Activated CD4-positive, alpha-beta T cell treated with anti-CD3 and anti-CD28 coated beads, Interleukin-2, amount 10 ng/mL, durations not matched to agents 24 days and 14 days (primary cell): ENCODE measurements at regions of chr3 and their contacts with region 1.

Region 1: DNA sequence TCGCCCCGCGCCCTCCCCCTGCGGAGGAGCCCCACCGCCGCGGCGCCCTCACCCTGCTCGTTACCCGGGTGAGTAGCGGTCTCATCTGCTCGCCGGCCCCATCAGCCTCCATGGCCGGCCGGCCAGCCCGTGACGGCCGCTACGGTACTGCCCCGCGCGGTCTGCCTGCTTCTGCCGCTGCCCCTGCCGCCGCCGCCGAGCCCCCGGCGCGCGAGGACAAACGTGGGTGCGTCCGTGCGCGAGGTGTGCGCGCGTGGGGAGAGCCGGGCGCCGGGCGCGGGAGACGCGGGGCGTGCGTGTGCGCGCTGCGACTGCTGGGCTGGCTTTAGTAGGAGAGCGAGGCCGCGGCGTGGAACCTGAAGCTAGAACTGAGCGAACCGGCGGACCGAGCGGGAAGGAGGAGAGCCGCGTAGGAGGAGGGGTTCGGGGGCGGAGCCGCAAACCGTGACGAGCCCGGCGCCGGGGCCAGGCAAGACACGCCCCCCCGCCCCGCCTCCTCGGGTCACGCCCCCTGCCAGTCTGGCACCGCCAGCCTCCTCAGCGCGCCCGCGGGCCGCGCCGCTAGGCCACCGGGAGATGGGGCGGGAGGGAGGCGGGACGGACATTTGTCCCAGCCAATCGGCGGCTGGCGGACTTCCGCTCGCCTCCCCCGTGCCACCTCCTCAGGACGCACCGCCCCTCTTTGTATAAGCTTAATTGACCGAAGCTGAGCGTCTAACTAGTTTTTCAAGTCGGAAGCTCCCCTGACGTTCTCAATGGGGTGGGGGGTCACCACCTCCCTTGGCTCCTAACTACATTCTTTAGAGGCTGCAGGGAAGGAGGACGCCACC is at the start of gene SLC4A7:
- DNase-seq: peak; percentile 99
- H3K4me3 Mint-ChIP-seq: peak within 1 kb of the TSS; percentile 100
- H3K27ac Mint-ChIP-seq: peak within 1 kb of the TSS; percentile 99
- H3K4me1 Mint-ChIP-seq: peaks cover 35% of the 10 kb centered on the region
- H3K27me3 Mint-ChIP-seq: no peaks in the 10 kb centered on the region
- total RNA-seq, gene SLC4A7: 65.8 and 69.0 TPM in 2 replicates

Region 2: DNA sequence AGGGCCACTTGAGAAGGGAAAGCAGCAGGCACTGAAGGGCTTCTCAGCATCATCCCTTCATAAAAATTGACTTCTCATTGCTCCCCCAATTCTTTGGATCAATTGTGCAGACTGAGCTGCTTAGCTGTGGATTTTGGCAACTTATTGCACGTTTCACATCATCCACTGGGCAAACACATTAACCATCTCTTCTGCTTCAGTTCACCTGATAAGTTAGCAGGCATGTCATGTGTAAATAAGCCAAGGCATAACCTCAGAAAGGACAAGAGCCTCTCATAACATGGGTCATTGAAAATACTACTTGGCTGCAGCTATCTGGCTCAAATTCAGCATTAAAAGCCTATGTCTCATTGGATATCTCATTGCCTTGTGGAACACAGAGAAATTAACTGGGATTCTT is 495.2 kb before region 1 on chr3:
- intact Hi-C with region 1: no loop called
- DNase-seq: no peak
- H3K4me3 Mint-ChIP-seq: no peak overlapping the region
- H3K27ac Mint-ChIP-seq: no peak overlapping the region
- H3K4me1 Mint-ChIP-seq: no peaks in the 10 kb centered on the region
- H3K27me3 Mint-ChIP-seq: no peaks in the 10 kb centered on the region

Region 3: GRCh38 chr3:27368831-27369607 is 115.2 kb before region 1 on chr3 and contains the start of gene NEK10:
- intact Hi-C with region 1: loop called (anchors 1 kb)
- DNase-seq: peak; percentile 98
- H3K4me3 Mint-ChIP-seq: peak within 1 kb of the TSS; percentile 95
- H3K27ac Mint-ChIP-seq: peak within 1 kb of the TSS; percentile 77
- H3K4me1 Mint-ChIP-seq: peaks cover 13% of the 10 kb centered on the region
- H3K27me3 Mint-ChIP-seq: no peaks in the 10 kb centered on the region
- total RNA-seq, gene NEK10: 0.26 and 0.28 TPM in 2 replicates

Region 4: DNA sequence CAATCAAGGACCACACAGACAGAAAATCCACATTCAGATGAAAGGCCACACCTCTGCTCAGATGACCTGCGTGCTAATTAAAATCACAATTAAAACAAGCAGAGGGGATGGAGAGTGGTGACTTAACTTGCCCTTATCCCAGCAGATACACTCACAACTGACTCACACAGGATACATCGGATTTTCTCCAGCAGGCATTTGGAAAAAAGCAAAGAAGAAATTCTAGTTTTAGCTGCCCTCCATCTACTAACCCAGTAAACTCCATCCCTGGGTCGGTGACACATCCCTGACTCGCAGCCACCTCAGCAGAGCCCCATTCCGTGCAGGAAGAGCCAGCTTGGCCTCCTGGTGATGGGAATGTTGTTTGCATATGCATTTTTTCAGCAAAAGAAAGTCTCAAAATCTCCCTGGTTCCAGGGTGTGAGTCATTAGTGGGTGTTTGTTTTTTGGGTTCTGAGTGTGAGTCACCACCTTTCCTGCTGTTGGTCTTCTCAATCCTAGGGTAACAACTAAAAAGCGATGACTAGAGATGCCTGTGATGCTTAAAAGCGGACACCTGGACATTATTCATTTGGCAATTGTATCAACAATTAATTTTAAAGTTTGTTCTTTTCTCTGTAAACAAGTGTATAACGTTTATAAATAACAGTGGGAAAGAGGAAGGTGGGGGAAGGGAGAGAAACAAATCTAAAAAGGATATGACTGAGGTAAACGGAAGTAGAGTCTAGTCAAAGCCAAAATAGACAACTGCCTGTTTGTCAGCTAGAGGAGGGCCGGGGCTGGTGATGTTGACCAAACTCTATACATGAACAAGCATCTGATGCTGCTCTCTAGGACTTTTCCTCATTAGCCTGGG is 49.7 kb after region 1 on chr3:
- intact Hi-C with region 1: loop called (anchors 2 kb)
- DNase-seq: peak; percentile 74
- H3K4me3 Mint-ChIP-seq: peak overlapping the region; percentile 61
- H3K27ac Mint-ChIP-seq: peak overlapping the region; percentile 84
- H3K4me1 Mint-ChIP-seq: peaks cover 21% of the 10 kb centered on the region
- H3K27me3 Mint-ChIP-seq: no peaks in the 10 kb centered on the region

Region 5: GRCh38 chr3:27559835-27560234 is 75.6 kb after region 1 on chr3:
- intact Hi-C with region 1: no loop called
- DNase-seq: no peak
- H3K4me3 Mint-ChIP-seq: no peak overlapping the region
- H3K27ac Mint-ChIP-seq: no peak overlapping the region
- H3K4me1 Mint-ChIP-seq: no peaks in the 10 kb centered on the region
- H3K27me3 Mint-ChIP-seq: peaks cover 5% of the 10 kb centered on the region

Region 6: DNA sequence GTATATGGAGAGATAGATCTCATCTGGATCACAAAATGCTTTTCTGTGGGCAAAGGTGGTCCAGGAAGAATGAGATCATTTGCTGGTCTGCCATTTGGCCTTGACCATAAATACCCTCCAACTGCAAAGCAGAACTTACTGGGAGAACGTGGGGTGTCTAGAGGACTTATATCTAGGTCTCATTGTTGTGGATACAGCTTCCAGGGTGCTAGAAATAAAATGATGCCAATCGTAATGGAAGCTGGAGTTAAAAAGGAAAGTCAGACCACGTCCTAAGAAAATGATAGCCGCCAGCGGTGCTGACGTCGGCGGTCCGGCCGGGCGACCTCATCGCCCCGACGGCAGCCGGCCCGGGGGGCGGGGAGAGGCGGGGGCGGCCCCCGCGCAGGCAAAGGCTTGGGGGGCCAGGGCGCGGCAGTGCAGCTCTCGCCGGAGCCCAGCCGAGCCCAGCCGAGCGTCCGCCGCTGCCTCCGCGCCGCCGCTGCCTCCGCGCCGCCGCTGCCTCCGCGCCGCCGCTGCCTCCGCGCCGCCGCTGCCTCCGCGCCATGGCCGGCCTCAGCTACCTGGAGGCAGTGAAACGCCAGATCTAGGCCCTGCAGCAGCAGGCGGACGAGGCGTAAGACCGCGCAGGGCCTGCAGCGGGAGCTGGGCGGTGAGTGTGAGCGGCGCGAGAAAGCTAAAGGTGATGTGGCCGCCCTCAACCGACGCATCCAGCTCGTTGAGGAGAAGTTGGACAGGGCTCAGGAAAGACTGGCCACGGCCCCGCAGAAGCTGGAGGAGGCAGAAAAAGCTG is 148.4 kb after region 1 on chr3:
- intact Hi-C with region 1: loop called (anchors 2 kb)
- DNase-seq: peak; percentile 83
- H3K4me3 Mint-ChIP-seq: peak overlapping the region; percentile 85
- H3K27ac Mint-ChIP-seq: peak overlapping the region; percentile 84
- H3K4me1 Mint-ChIP-seq: peaks cover 30% of the 10 kb centered on the region
- H3K27me3 Mint-ChIP-seq: no peaks in the 10 kb centered on the region

Region 7: DNA sequence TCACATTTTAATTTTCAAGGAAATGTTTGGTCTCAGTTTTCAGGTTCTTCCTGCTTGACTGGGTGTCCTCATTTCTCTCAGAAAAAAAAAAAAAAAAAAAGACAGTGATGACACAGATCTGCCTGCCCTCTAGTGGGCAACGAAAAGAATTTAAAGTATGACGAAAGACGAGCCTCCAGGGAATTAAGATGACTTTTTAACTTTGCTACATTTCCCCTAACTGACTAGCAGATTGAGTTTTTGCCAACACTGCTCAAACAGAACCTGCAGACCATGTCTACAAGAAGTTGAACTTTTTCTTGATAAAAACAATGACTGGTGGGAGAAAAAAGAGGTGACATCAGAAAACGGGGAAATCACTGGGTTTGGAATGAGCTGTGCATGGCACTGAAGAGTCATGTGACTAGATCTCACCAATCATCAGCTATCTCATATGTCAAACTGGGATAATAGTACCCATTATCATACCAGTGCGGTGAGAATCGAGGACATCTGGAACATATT is 197.1 kb after region 1 on chr3:
- intact Hi-C with region 1: loop called (anchors 1 kb)
- DNase-seq: peak; percentile 80
- H3K4me3 Mint-ChIP-seq: peak overlapping the region; percentile 68
- H3K27ac Mint-ChIP-seq: peak overlapping the region; percentile 74
- H3K4me1 Mint-ChIP-seq: peaks cover 7% of the 10 kb centered on the region
- H3K27me3 Mint-ChIP-seq: peaks cover 11% of the 10 kb centered on the region

Region 8: GRCh38 chr3:28348629-28349483 is 864.6 kb after region 1 on chr3 and contains the starts of genes AZI2 and ZCWPW2:
- intact Hi-C with region 1: loop called (anchors 1 kb)
- DNase-seq: peak; percentile 98
- H3K4me3 Mint-ChIP-seq: peak within 1 kb of the TSS; percentile 98
- H3K27ac Mint-ChIP-seq: peak within 1 kb of the TSS; percentile 96
- H3K4me1 Mint-ChIP-seq: peaks cover 41% of the 10 kb centered on the region
- H3K27me3 Mint-ChIP-seq: no peaks in the 10 kb centered on the region
- total RNA-seq, gene AZI2: 35.6 and 38.7 TPM in 2 replicates
- total RNA-seq, gene ZCWPW2: 0.14 TPM in 1 of 2 replicates, not detected in the other